ACHN (cell line): ENCODE measurements at regions of chr15 and their contacts with region 1.

Region 1: GRCh38 chr15:78149068-78149804 is at the start of gene IDH3A:
- DNase-seq: peak; percentile 94

Region 2: DNA sequence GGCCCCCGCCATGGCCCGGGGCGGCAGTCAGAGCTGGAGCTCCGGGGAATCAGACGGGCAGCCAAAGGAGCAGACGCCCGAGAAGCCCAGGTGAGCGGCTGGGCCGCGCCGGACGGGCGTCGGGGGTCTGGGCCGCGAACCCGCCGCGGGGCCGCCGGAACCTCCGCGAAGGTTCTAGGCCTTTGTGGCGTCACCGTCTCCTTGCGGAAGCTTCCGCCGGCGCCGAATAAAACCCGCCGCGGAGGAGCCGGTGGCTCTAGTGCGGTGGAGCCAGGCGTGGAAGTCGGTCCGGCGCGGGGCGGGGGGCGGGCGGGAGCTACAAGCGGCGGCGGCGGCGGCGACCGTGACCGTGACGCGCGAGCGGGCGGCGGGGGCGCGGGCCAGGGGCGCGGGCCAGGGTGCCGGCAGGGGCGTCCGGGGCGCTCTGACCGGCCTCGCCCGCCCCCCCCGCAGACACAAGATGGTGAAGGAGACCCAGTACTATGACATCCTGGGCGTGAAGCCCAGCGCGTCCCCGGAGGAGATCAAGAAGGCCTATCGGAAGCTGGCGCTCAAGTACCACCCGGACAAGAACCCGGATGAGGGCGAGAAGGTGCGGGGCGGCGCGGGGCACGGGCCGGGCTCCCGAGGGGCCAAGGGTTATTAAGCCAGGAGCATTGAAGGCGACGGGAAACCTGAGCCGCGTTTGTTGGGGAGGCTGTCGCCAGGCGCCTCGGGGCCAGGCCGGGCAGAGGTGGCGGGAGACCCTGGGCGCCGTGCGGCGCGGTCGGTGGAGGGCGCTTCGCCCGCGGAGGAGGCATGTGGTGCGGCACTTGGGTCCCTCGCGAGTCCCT is 115.3 kb after region 1 on chr15 and contains the start of gene DNAJA4:
- in situ Hi-C with region 1: loop called (anchors 25 kb)
- DNase-seq: peak; percentile 27